HCT116 (cell line): ENCODE measurements at regions of chr16 and their contacts with region 1.

Region 1: GRCh38 chr16:16890964-16891363 is 512.0 kb downstream of the NPIPA7 start:
- DNase-seq: peak; percentile 7
- ATAC-seq: peak; percentile 47; the same call in 1 of the 2 replicates
- H3K4me3 ChIP-seq: no peak overlapping the region
- H3K27ac ChIP-seq: no peak overlapping the region
- H3K4me1 ChIP-seq: no peaks in the 10 kb centered on the region
- H3K27me3 ChIP-seq: peaks cover 14% of the 10 kb centered on the region
- CTCF ChIP-seq: no peak
- POLR2A ChIP-seq: no peak
- RAD21 ChIP-seq: no peak

Region 2: DNA sequence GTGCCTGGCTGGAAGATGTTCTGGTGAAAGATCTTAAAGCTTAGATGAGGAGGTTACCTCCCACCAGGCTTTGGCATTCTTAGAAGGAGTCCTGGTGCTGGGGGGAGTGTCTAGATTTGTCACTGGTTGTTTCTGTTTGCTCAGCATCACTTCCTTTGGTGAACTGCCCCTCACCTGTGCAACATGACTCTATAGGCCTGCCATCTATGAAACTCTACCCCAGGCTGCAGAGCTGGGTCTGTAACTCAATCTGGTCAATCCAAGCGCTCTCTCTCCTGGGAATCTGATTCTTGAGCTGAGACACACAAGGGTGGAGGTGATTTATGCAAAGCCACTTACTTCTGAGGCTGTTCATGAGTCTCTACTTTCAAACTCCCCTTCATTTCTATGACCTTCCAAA is 112.6 kb before region 1 on chr16:
- CTCF ChIA-PET with region 1: no interaction called
- POLR2A ChIA-PET with region 1: no interaction called
- RAD21 ChIA-PET with region 1: no interaction called
- intact Hi-C with region 1: no loop called
- DNase-seq: no peak
- ATAC-seq: no peak
- H3K4me3 ChIP-seq: no peak overlapping the region
- H3K27ac ChIP-seq: no peak overlapping the region
- H3K4me1 ChIP-seq: no peaks in the 10 kb centered on the region
- H3K27me3 ChIP-seq: peaks cover 14% of the 10 kb centered on the region; the same call in 1 of the 2 replicates
- CTCF ChIP-seq: no peak
- POLR2A ChIP-seq: no peak
- RAD21 ChIP-seq: no peak

Region 3: DNA sequence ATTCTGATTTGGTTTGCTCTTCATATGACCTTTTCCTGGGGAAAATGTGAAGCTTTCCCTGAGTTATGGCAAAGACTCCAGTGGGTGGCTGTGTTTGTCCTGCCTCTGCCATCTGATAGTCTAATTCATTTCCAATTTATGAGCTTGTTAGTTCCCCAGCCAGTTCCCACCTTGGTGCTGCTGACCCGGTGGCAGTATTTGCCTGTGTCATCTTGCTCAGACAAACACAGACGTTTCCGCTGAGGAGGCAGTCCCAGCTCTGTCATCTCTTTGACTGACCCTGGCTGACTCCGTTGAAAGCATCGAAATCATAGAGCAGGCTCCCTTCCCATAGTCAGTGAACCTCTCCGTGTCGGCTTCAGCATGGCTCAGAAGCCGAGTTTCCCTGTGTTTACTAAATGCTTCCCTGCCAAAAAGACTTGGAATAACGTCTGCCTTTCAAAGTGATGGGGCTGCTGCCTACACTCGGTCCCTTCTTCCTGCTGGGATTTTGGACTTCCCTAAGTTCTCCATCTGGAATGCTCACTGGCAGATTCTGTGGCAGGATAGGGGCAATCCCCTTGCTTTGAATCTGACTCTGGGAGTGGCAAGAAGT is 26.3 kb after region 1 on chr16:
- CTCF ChIA-PET with region 1: no interaction called
- POLR2A ChIA-PET with region 1: no interaction called
- RAD21 ChIA-PET with region 1: no interaction called
- intact Hi-C with region 1: no loop called
- DNase-seq: no peak
- ATAC-seq: no peak
- H3K4me3 ChIP-seq: no peak overlapping the region
- H3K27ac ChIP-seq: no peak overlapping the region
- H3K4me1 ChIP-seq: no peaks in the 10 kb centered on the region
- H3K27me3 ChIP-seq: peaks cover 29% of the 10 kb centered on the region
- CTCF ChIP-seq: no peak
- POLR2A ChIP-seq: no peak
- RAD21 ChIP-seq: no peak

Region 4: DNA sequence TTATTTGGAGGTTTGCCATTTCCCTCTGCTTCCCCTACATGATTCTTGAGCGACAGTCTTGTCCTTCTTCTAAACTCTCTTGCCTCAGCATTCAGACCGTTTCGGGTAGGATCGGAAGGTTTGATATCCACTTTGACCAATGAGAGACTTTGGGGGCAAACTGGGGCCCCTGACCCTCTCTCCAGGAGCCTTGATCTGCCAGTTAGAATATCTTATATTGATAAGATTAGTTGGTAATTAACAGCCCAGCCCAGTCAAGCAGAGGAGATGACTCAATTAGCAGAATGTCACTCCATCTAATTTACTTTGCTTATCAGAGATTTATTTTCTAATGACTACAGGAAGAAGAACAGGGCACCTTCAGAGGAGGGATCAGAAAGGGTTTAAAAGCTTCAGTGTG is 47.0 kb after region 1 on chr16:
- CTCF ChIA-PET with region 1: no interaction called
- POLR2A ChIA-PET with region 1: no interaction called
- RAD21 ChIA-PET with region 1: no interaction called
- intact Hi-C with region 1: loop called (anchors 5 kb)
- DNase-seq: no peak
- ATAC-seq: no peak
- H3K4me3 ChIP-seq: no peak overlapping the region
- H3K27ac ChIP-seq: no peak overlapping the region
- H3K4me1 ChIP-seq: no peaks in the 10 kb centered on the region
- H3K27me3 ChIP-seq: peaks cover 21% of the 10 kb centered on the region
- CTCF ChIP-seq: no peak
- POLR2A ChIP-seq: no peak
- RAD21 ChIP-seq: no peak

Region 5: GRCh38 chr16:16960785-16961184 is 69.8 kb after region 1 on chr16:
- CTCF ChIA-PET with region 1: no interaction called
- POLR2A ChIA-PET with region 1: no interaction called
- RAD21 ChIA-PET with region 1: no interaction called
- intact Hi-C with region 1: no loop called
- DNase-seq: no peak
- ATAC-seq: no peak
- H3K4me3 ChIP-seq: no peak overlapping the region
- H3K27ac ChIP-seq: no peak overlapping the region
- H3K4me1 ChIP-seq: no peaks in the 10 kb centered on the region
- H3K27me3 ChIP-seq: peaks cover 26% of the 10 kb centered on the region
- CTCF ChIP-seq: no peak
- POLR2A ChIP-seq: no peak
- RAD21 ChIP-seq: no peak

Region 6: GRCh38 chr16:17018585-17018939 is 127.6 kb after region 1 on chr16:
- CTCF ChIA-PET with region 1: no interaction called
- POLR2A ChIA-PET with region 1: no interaction called
- RAD21 ChIA-PET with region 1: no interaction called
- intact Hi-C with region 1: no loop called
- DNase-seq: no peak
- ATAC-seq: no peak
- H3K4me3 ChIP-seq: no peak overlapping the region
- H3K27ac ChIP-seq: no peak overlapping the region
- H3K4me1 ChIP-seq: no peaks in the 10 kb centered on the region
- H3K27me3 ChIP-seq: peaks cover 5% of the 10 kb centered on the region; the same call in 1 of the 2 replicates
- CTCF ChIP-seq: no peak
- POLR2A ChIP-seq: no peak
- RAD21 ChIP-seq: no peak